ENCODE measurements at regions of chr11 and their contacts with region 1.

Region 1: DNA sequence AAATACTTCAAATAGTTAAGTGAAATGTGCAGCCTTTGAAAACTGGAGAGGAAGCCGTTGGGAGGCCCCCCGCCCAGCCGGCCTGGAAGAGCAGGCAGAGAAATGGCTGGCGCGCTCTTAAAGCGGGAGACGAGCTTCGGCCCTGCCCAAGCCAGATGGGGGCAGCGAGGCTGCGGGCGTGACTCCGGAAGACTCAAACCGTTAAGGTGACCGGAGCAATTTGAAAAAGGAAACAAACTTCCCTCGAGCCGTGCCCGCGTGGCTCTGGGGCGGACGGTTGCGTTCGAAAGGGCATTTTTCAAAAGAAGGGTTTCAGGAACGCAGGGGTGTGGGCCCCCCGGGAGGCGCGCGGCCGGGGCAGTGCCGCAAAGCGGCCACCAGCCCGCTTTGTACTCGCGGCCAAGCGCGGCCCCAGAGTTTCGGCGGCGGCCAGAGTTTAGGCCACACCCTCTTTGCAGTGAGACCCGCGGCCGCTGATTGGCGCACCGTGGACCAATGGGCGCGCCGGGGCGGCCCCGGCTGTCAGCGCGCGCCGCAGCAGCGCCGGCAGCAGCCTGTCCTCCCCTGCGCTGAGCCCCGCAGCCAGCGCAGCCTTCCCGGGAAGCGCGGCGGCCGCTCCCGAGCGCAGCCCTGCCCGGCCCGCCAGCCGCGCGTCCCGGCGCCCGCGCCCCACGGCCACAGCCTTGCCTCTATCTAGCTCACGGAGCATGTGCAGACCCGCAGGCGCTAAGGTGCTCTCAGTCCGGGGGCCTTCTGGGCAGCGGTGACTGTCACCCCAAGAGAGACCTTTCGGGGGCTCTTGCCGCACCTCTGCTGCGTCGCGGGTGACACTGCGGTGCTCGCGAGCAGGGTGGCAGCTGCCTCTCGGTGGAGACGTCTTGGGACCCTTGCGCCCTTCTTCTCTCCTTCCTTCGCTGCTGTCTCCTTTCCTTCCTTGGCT is at the start of gene NAV2:
- DNase-seq: peak; percentile 93
- H3K4me3 ChIP-seq: peak within 1 kb of the TSS; percentile 56 to 86 (median 84)
- H3K27ac ChIP-seq: peak within 1 kb of the TSS; percentile 93
- H3K4me1 ChIP-seq: peaks cover 40% of the 10 kb centered on the region
- H3K27me3 ChIP-seq: no peaks in the 10 kb centered on the region
- CTCF ChIP-seq: no peak
- POLR2A ChIP-seq: peak; percentile 98
- total RNA-seq, gene NAV2: 45.8 and 68.0 TPM in 2 replicates

Region 2: GRCh38 chr11:19370100-19370861 is 342.3 kb before region 1 on chr11:
- CTCF ChIA-PET with region 1: no interaction called
- POLR2A ChIA-PET with region 1: no interaction called
- dilution Hi-C with region 1: no loop called
- intact Hi-C with region 1: loop called (anchors 1 kb)
- DNase-seq: peak; percentile 94
- H3K4me3 ChIP-seq: peak overlapping the region in 1 of 3 experiments; percentile 28
- H3K27ac ChIP-seq: peak overlapping the region; percentile 91
- H3K4me1 ChIP-seq: peaks cover 83% of the 10 kb centered on the region
- H3K27me3 ChIP-seq: no peaks in the 10 kb centered on the region
- CTCF ChIP-seq: no peak
- POLR2A ChIP-seq: no peak

Region 3: DNA sequence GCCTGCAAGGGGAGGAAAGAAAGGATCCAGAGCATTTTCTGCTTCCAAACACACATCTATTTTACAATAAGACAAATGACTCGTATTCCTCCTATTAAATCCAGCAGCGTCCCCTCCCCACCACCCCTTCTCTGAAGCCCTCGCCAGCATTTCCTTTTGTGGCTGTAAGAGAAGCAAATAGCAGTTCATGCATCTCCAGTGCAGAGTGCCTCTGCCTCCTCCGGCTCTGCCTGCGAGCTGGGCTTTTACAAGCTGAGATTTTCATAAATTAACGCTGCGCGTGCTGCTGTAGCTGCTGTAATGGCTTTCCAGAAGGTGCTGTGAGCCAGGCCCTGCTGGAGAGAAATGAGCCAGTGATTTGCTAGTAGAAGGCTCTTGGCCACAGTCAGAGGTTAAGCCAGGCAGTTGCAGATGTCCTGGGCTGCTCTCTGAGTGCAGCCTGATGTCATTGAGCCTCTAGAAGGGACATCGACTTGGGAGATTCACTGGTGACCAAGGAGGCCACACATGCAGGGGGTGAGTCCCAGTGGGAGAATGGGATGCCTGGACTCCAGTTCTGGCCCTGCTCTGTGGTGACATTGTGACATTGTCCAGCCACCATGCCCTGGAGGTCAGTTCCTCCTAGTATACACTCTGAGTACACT is 134.5 kb before region 1 on chr11:
- CTCF ChIA-PET with region 1: interaction called, 3 read pairs
- POLR2A ChIA-PET with region 1: interaction called, 5 read pairs
- dilution Hi-C with region 1: no loop called
- intact Hi-C with region 1: loop called (anchors 1 kb)
- DNase-seq: peak; percentile 86
- H3K4me3 ChIP-seq: peak overlapping the region in 1 of 3 experiments; percentile 25
- H3K27ac ChIP-seq: peak overlapping the region; percentile 78
- H3K4me1 ChIP-seq: peaks cover 25% of the 10 kb centered on the region
- H3K27me3 ChIP-seq: no peaks in the 10 kb centered on the region
- CTCF ChIP-seq: no peak
- POLR2A ChIP-seq: no peak

Region 4: DNA sequence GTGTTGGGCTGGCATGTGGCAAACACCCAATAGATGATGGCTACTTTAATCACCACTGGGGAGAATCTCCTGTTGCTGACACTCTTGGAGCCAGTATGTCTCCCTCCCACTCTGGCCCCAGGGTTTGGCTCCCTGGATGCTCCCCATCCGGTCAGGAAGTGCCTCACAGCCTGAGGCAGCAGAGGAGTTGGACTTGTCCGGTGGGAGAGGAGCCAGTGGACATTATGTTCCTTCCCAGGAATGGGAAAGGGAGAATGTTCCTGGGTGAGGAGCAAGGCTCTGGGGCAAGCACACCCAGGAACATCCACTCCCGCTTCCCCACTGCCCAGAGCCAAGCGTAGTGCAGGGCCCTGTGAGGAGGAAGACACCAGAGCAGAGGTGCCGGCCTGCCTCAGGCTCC is 84.5 kb before region 1 on chr11:
- CTCF ChIA-PET with region 1: no interaction called
- POLR2A ChIA-PET with region 1: no interaction called
- dilution Hi-C with region 1: no loop called
- intact Hi-C with region 1: loop called (anchors 1 kb)
- DNase-seq: peak; percentile 52
- H3K4me3 ChIP-seq: no peak overlapping the region
- H3K27ac ChIP-seq: peak overlapping the region; percentile 63
- H3K4me1 ChIP-seq: peaks cover 13% of the 10 kb centered on the region
- H3K27me3 ChIP-seq: no peaks in the 10 kb centered on the region
- CTCF ChIP-seq: no peak
- POLR2A ChIP-seq: peak; percentile 45

Region 5: DNA sequence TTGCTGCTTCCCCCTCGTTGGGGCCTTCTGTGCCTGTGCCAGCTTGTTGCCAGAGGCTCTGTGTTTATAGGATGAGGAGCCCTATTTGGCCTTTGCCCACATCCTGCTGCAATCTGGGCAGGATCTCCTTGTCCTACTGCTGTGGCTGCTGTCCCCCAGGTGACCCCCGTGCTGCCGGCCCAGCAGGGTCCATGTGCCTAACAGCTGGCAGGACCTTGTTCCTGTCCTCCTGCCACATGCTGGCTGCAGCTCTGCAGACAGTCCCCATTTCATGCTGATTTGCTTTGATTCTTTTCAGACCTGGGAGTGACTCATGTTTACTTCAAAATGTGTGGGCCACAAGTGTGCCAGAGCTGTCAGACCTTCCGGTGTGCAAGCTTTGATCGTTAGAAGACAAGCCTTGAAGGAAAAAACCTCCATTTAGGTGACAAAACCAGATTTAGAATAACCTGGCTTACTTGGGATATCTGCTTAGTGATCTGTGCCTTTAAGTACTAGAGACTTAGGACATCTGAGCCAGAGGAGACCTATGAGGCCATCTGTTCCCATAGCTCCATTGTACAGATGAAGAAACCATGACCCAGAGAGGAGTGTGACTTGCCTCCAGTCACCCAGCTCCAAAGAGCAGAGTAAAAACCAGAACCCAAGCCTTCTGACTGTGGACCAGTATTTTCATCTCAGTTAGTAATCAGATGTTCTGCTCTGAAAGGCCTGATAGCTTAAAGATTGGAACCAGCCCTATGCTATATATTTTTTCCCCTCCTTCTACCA is 11.2 kb after region 1 on chr11:
- CTCF ChIA-PET with region 1: interaction called, 11 read pairs
- POLR2A ChIA-PET with region 1: interaction called, 6 read pairs
- dilution Hi-C with region 1: no loop called
- intact Hi-C with region 1: no loop called
- DNase-seq: peak; percentile 72
- H3K4me3 ChIP-seq: no peak overlapping the region
- H3K27ac ChIP-seq: peak overlapping the region; percentile 65
- H3K4me1 ChIP-seq: peaks cover 25% of the 10 kb centered on the region
- H3K27me3 ChIP-seq: no peaks in the 10 kb centered on the region
- CTCF ChIP-seq: no peak
- POLR2A ChIP-seq: no peak

Region 6: GRCh38 chr11:19742588-19743292 is 30.2 kb after region 1 on chr11:
- CTCF ChIA-PET with region 1: interaction called, 22 read pairs
- POLR2A ChIA-PET with region 1: no interaction called
- dilution Hi-C with region 1: no loop called
- intact Hi-C with region 1: loop called (anchors 1 kb)
- DNase-seq: peak; percentile 82
- H3K4me3 ChIP-seq: no peak overlapping the region
- H3K27ac ChIP-seq: no peak overlapping the region
- H3K4me1 ChIP-seq: peaks cover 8% of the 10 kb centered on the region
- H3K27me3 ChIP-seq: no peaks in the 10 kb centered on the region
- CTCF ChIP-seq: peak; percentile 75 to 76
- POLR2A ChIP-seq: no peak

Region 7: GRCh38 chr11:19753451-19754106 is 41.0 kb after region 1 on chr11:
- CTCF ChIA-PET with region 1: no interaction called
- POLR2A ChIA-PET with region 1: no interaction called
- dilution Hi-C with region 1: no loop called
- intact Hi-C with region 1: no loop called
- DNase-seq: no peak
- H3K4me3 ChIP-seq: no peak overlapping the region
- H3K27ac ChIP-seq: no peak overlapping the region
- H3K4me1 ChIP-seq: no peaks in the 10 kb centered on the region
- H3K27me3 ChIP-seq: no peaks in the 10 kb centered on the region
- CTCF ChIP-seq: no peak
- POLR2A ChIP-seq: no peak

Measured in endothelial cell of umbilical vein (primary cell).